ENCODE measurements at regions of chr5 and their contacts with region 1.

Region 1: GRCh38 chr5:150263801-150264621 is 25.6 kb downstream of the CAMK2A start:
- DNase-seq: no peak
- ATAC-seq: peak; percentile 38
- H3K4me3 ChIP-seq: no peak overlapping the region
- H3K4me1 ChIP-seq: no peaks in the 10 kb centered on the region
- CTCF ChIP-seq: no peak

Region 2: GRCh38 chr5:150357326-150358260 is 93.6 kb after region 1 on chr5 and contains the start of gene TCOF1:
- intact Hi-C with region 1: loop called in 1 of 2 experiments (anchors 10 kb)
- DNase-seq: peak; percentile 98 to 99 (median 99)
- ATAC-seq: peak; percentile 96
- H3K4me3 ChIP-seq: peak within 1 kb of the TSS; percentile 58
- H3K4me1 ChIP-seq: peaks cover 23% of the 10 kb centered on the region
- CTCF ChIP-seq: no peak
- total RNA-seq, gene TCOF1: 17.3 to 36.2 (median 26.0) TPM

Region 3: DNA sequence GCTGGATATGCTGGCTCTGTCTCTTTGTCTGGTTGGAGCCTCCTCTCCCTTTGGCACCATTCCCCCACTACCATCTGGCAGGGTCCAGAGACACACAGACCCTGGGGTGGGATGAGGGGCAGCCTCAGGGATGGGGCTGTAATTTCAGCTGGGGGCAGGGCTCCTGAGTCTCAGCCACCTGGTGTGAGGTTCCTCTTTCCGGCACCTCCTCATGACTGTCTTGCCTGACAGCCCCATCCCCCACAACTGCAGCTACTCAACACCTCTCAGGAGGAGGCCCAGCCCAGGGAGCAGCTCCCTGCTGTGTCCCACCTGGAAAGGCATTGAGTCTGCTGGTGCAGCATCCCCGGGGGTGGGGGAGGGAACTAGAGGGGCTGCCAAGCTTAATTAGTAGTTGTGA is 197.2 kb after region 1 on chr5:
- intact Hi-C with region 1: no loop called
- DNase-seq: peak in 1 of 3 donors; percentile 61
- ATAC-seq: peak; percentile 34
- H3K4me3 ChIP-seq: no peak overlapping the region
- H3K4me1 ChIP-seq: no peaks in the 10 kb centered on the region
- CTCF ChIP-seq: no peak

Measured in mucosa of descending colon (tissue), 3 donors.